ENCODE measurements at regions of chr13 and their contacts with region 1.

Region 1: GRCh38 chr13:99063952-99064351 is 86.1 kb upstream of the DOCK9 start:
- DNase-seq: no peak
- H3K4me3 Mint-ChIP-seq: peak overlapping the region; percentile 20
- H3K27ac Mint-ChIP-seq: peak overlapping the region; percentile 40
- H3K4me1 Mint-ChIP-seq: peaks cover 60% of the 10 kb centered on the region
- H3K27me3 Mint-ChIP-seq: no peaks in the 10 kb centered on the region

Region 2: DNA sequence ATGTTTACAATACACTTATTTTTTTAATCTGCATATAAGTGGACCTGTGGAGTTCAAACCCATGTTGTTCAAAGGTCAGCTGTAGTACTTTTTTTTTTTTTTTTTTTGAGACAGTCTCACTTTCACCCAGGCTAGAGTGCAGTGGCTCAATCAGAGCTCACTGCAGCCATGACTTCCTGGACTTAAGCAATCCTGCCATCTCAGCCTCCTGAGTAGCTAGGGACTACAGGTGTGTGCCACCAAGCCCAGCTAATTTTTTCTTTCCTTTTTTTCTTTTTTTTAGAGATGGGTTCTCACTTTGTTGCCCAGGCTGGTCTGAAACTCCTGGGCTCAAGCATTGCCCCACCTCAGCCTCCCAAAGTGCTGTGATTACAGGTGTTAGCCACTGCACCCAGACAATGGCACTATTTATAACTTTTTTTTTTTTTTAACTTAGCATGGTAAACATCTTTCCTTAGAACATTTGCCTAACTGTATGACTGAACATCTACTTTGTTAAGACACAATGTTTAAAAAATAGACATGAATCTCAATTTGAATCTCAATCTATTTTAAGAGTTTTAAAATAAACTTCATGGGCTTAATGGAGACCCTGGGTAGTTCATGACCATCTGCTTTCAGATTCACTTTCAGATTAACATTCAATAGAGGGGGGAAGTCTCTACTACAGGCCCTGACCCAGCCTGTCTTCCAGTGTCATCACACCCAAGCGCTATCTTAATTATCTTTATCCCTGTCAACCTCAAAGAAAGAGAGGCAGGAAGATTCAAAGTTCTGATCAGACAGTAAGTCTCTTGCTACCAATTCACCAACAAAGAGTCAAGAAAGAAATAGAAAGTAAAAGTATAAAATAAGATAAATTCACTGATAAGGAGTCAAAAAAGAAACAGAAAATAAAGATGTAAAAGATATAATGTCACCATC is 11.6 kb after region 1 on chr13:
- intact Hi-C with region 1: loop called (anchors 1 kb)
- DNase-seq: peak; percentile 50
- H3K4me3 Mint-ChIP-seq: peak overlapping the region; percentile 45
- H3K27ac Mint-ChIP-seq: peak overlapping the region; percentile 81
- H3K4me1 Mint-ChIP-seq: peaks cover 65% of the 10 kb centered on the region
- H3K27me3 Mint-ChIP-seq: no peaks in the 10 kb centered on the region

Measured in activated T-helper 2 cell treated with anti-CD3 and anti-CD28 coated beads, Interferon-gamma antibody, Interleukin-2, Interleukin-4, amounts not matched to agents 10 μg/mL and 5 μg/mL and 100 μg/mL, durations not matched to agents 14 hours and 24 hours and 36 hours (primary cell).